Thyroid gland (tissue), 4 donors: ENCODE measurements at regions of chr22 and their contacts with region 1.

Region 1: DNA sequence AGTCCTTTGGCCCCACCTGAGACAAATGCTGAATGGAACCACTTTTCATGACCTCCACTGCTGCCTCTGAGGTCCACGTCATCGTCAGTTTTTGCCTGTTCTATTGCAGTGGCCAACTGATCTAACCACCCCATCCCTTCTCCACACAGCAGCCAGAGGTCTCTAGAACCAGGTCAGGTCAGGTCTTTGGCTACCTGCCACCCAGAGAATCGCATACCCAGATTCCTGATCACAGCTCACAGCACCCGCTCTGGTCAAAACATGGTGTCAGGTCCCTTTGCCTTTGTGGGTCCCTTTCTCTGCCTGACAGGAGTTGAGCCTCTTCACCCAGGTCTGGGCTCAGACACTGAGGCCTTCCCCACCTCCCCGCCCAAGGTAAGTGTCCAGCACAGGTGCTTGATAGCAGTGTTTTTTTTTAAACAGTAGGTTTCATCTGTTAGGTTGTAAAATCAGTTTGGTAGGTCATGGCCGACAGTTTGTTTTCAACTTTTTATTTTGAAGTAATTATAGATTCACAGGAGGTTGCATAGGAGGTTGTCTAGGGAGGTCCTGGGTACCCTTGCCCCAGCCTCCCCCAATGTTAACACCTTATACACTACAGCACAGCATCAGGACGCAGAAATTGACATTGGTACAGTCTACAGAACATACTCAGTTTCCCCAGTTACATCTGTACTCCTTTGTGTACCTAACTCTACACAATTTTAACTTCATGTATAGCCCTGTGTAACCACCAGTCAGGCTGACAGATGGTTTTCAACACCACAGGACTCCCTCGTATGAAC is 6.9 kb downstream of the C22orf39 start:
- DNase-seq: no peak
- H3K4me3 ChIP-seq: no peak overlapping the region
- H3K27ac ChIP-seq: no peak overlapping the region
- H3K4me1 ChIP-seq: peaks cover 3 to 8% of the 10 kb centered on the region in 2 donors
- H3K27me3 ChIP-seq: no peaks in the 10 kb centered on the region
- CTCF ChIP-seq: no peak
- POLR2A ChIP-seq: no peak

Region 2: GRCh38 chr22:19307872-19308271 is 132.7 kb before region 1 on chr22:
- intact Hi-C with region 1: loop called (anchors 5 kb)
- DNase-seq: no peak
- H3K4me3 ChIP-seq: no peak overlapping the region
- H3K27ac ChIP-seq: no peak overlapping the region
- H3K4me1 ChIP-seq: no peaks in the 10 kb centered on the region
- H3K27me3 ChIP-seq: no peaks in the 10 kb centered on the region
- CTCF ChIP-seq: no peak
- POLR2A ChIP-seq: no peak

Region 3: DNA sequence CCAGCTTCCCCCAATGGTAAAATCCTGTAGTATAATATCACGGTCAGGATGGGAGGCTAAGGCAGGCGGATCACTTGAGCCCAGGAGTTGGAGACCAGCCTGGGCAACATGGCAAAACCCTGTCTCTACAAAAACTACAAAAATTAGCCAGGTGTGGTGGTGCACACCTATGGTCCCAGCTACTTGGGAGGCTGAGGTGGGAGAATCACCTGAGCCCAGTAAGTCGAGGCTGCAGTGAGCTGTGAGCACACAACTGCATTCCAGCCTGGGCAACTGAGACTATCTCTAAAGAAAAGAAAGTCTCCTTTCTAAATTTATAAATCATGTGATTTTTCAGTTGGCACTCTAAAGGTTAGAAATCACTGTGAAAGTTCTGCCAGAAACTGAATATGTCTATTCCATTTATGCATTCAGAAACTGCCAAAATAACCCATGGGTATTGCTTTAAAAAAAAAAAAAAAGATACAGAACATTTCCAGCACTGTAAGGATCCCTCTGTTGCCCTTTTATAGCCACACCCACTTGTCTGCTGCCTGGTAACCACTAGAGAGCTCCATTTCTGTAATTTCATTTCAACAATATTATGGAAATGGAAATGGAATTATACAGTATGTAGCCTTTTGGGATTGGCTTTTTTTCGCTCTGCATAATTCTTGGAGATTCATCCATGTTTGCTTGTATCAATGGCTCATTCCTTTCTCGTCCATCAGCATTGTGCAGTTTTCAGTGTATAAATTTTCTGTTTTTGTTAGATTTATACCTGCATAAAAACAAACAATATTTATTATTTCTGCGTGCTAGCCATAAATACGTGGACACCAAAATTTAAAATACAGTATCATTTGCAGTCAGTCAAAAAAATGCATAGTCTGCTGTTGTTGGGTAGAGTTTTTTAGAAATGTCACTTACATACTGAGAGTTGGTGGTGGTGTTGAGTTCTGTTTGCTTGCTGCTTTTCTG is 48.6 kb after region 1 on chr22:
- intact Hi-C with region 1: no loop called
- DNase-seq: no peak
- H3K4me3 ChIP-seq: no peak overlapping the region
- H3K27ac ChIP-seq: no peak overlapping the region
- H3K4me1 ChIP-seq: no peaks in the 10 kb centered on the region
- H3K27me3 ChIP-seq: no peaks in the 10 kb centered on the region
- CTCF ChIP-seq: no peak
- POLR2A ChIP-seq: no peak